GM10248 (cell line): ENCODE measurements at regions of chr18 and their contacts with region 1.

Region 1: DNA sequence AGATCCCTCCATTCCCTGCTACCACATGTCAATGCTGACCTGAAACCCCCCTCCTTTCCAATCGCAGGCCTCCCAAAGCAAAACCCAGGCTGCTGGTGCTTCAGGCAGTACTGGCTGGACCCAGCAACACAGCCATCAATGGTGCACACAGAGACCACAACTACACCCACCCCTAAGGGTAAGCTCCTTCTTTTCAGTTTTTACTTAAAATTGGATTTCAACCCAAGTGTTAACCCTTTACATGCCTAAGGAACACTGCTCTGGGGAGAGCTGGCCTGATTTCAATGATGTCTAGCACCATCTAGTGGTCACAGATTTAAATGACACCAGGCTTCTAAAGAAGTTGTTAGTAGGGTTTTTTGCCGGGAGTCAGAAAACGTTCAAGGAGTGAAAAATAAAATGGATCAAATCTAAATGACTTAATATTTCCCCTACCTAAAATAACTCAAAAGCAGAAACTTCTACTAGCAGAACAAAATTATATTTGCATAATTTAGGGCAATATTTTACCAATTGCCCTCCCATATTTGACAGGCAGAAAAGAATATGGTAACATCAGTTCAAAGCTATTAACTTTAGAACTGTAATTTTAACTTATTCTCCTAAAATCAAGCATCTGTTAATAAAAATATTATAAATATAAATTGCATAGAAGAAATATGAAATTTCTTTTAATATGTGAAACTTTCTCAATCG is 24.6 kb downstream of the FECH start:
- DNase-seq: peak; percentile 67
- CTCF ChIP-seq: peak; percentile 69

Region 2: DNA sequence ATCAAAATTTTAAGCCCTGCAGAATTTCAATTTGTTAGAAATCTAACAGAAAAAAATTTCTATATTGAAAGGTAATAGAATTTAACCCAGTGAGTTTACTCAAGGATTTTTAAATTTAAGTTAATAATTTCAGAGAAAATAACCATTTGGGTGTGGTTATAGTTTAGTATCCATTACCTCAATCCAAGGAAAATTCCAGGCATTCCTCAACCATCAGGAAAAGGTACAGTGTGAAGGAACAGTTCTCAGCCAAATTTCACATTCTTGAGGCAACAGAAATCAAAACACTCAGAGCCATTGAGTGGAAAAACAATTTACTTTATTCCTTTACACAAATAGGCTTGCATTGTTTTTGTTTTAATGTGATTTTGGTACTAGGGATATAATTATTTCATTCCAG is 81.2 kb before region 1 on chr18:
- CTCF ChIA-PET with region 1: no interaction called
- POLR2A ChIA-PET with region 1: no interaction called
- DNase-seq: no peak
- CTCF ChIP-seq: no peak

Region 3: GRCh38 chr18:57544936-57545660 is 16.8 kb before region 1 on chr18:
- CTCF ChIA-PET with region 1: interaction called, 10 read pairs
- POLR2A ChIA-PET with region 1: no interaction called
- DNase-seq: peak; percentile 43
- CTCF ChIP-seq: no peak

Region 4: GRCh38 chr18:57581302-57581934 is 19.5 kb after region 1 on chr18:
- CTCF ChIA-PET with region 1: interaction called, 16 read pairs
- POLR2A ChIA-PET with region 1: no interaction called
- DNase-seq: peak; percentile 54
- CTCF ChIP-seq: no peak